ENCODE measurements at regions of chr12 and their contacts with region 1.

Region 1: GRCh38 chr12:108193917-108194316 is 64.8 kb downstream of the WSCD2 start:
- DNase-seq: peak; percentile 21
- H3K4me3 ChIP-seq: no peak overlapping the region
- H3K27ac ChIP-seq: no peak overlapping the region
- H3K4me1 ChIP-seq: no peaks in the 10 kb centered on the region
- H3K27me3 ChIP-seq: no peaks in the 10 kb centered on the region
- CTCF ChIP-seq: peak; percentile 65
- POLR2A ChIP-seq: no peak

Region 2: GRCh38 chr12:107679336-107679735 is 514.6 kb before region 1 on chr12:
- CTCF ChIA-PET with region 1: interaction called, 4 read pairs
- POLR2A ChIA-PET with region 1: no interaction called
- dilution Hi-C with region 1: no loop called
- intact Hi-C with region 1: loop called (anchors 2 kb)
- DNase-seq: no peak
- H3K4me3 ChIP-seq: no peak overlapping the region
- H3K27ac ChIP-seq: no peak overlapping the region
- H3K4me1 ChIP-seq: no peaks in the 10 kb centered on the region
- H3K27me3 ChIP-seq: peaks cover 14 to 23% of the 10 kb centered on the region in 2 experiments
- CTCF ChIP-seq: no peak
- POLR2A ChIP-seq: no peak

Region 3: DNA sequence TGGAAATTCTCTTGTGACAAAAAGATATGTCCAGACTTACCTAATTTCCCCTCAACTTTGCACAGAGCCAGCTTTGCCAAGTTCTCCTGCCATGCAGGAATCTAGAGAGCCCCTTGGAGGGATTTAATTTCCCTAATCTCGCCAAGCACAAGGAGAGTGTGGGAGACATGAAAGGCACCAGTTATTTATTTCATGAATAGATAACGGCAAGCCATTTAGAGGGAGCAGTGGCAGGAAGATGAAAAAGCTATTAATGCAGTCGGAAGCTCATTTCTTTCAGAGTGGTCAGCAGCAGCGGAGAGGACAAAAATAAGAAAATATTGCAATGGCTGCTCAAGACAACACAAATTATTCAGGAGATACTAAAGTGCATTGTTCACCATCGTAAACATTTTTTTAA is 215.7 kb before region 1 on chr12:
- CTCF ChIA-PET with region 1: no interaction called
- POLR2A ChIA-PET with region 1: no interaction called
- dilution Hi-C with region 1: no loop called
- intact Hi-C with region 1: no loop called
- DNase-seq: no peak
- H3K4me3 ChIP-seq: no peak overlapping the region
- H3K27ac ChIP-seq: no peak overlapping the region
- H3K4me1 ChIP-seq: no peaks in the 10 kb centered on the region
- H3K27me3 ChIP-seq: no peaks in the 10 kb centered on the region
- CTCF ChIP-seq: no peak
- POLR2A ChIP-seq: no peak

Region 4: DNA sequence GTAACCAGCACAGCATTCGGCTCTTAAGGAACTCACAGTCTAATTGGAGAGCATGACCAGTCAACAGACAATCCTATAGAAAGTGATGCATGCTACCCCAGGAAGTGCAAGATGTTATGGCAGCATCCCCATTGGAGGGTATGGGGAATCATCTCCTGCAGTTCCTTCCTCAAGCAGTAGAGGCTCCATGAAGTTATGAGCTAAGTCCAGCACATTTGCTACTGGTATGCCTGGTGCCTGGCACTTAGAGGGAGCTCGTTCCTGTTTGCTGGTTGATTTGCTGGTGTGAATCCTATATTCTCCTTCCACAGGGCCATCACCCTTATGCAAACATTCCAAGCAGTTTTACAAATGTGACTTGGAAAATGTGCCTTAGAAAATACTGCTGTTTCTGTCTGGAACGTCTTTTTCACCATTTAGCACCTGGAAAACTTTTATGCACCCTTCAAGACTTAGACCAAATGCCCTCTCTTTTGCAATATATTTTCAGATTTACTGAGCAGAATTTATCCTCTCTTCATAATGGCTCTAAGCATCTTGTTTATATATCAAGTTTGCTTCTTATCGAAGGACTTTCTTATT is 201.0 kb before region 1 on chr12:
- CTCF ChIA-PET with region 1: interaction called, 3 read pairs
- POLR2A ChIA-PET with region 1: no interaction called
- dilution Hi-C with region 1: no loop called
- intact Hi-C with region 1: loop called (anchors 10 kb)
- DNase-seq: peak; percentile 20
- H3K4me3 ChIP-seq: no peak overlapping the region
- H3K27ac ChIP-seq: no peak overlapping the region
- H3K4me1 ChIP-seq: no peaks in the 10 kb centered on the region
- H3K27me3 ChIP-seq: no peaks in the 10 kb centered on the region
- CTCF ChIP-seq: peak; percentile 10 to 36
- POLR2A ChIP-seq: no peak

Region 5: DNA sequence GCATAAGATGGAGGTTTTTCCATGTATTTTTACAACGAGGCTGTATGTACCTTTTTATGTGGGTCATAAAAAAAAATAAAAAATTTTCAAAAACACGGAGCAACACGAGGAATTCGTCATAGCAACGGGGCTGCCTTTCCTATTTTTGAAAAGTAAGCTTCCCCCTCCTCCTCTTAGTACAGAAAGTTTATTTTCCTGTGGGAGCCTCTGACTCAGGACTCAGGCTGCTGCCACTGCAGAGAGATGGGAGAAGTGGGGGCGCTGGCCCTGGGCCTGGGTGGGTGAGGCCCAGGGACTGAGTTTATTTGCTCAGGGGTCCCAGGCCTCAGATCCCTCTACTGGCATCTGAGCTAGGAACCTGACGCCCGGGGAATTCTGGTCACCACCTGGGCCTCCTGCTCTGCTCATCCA is 155.4 kb after region 1 on chr12:
- CTCF ChIA-PET with region 1: no interaction called
- POLR2A ChIA-PET with region 1: no interaction called
- dilution Hi-C with region 1: no loop called
- intact Hi-C with region 1: no loop called
- DNase-seq: no peak
- H3K4me3 ChIP-seq: no peak overlapping the region
- H3K27ac ChIP-seq: no peak overlapping the region
- H3K4me1 ChIP-seq: no peaks in the 10 kb centered on the region
- H3K27me3 ChIP-seq: no peaks in the 10 kb centered on the region
- CTCF ChIP-seq: no peak
- POLR2A ChIP-seq: no peak